ENCODE measurements at regions of chr20 and their contacts with region 1.

Region 1: GRCh38 chr20:53623454-53624211 is 30.0 kb upstream of the ZNF217 start:
- DNase-seq: peak; percentile 89
- ATAC-seq: peak; percentile 62
- H3K4me3 ChIP-seq: peak overlapping the region; percentile 63
- H3K27ac ChIP-seq: peak overlapping the region; percentile 89
- H3K4me1 ChIP-seq: peaks cover 41% of the 10 kb centered on the region
- H3K27me3 ChIP-seq: no peaks in the 10 kb centered on the region
- CTCF ChIP-seq: peak; percentile 38; the same call in 1 of the 2 replicates

Region 2: GRCh38 chr20:53578492-53579222 is 45.0 kb before region 1 on chr20:
- CTCF ChIA-PET with region 1: interaction called, 3 read pairs
- POLR2A ChIA-PET with region 1: interaction called, 3 read pairs
- intact Hi-C with region 1: loop called (anchors 2 kb)
- DNase-seq: peak; percentile 100
- ATAC-seq: peak; percentile 12
- H3K4me3 ChIP-seq: peak overlapping the region; percentile 75
- H3K27ac ChIP-seq: peak overlapping the region; percentile 88
- H3K4me1 ChIP-seq: peaks cover 59% of the 10 kb centered on the region
- H3K27me3 ChIP-seq: no peaks in the 10 kb centered on the region
- CTCF ChIP-seq: peak; percentile 99

Region 3: DNA sequence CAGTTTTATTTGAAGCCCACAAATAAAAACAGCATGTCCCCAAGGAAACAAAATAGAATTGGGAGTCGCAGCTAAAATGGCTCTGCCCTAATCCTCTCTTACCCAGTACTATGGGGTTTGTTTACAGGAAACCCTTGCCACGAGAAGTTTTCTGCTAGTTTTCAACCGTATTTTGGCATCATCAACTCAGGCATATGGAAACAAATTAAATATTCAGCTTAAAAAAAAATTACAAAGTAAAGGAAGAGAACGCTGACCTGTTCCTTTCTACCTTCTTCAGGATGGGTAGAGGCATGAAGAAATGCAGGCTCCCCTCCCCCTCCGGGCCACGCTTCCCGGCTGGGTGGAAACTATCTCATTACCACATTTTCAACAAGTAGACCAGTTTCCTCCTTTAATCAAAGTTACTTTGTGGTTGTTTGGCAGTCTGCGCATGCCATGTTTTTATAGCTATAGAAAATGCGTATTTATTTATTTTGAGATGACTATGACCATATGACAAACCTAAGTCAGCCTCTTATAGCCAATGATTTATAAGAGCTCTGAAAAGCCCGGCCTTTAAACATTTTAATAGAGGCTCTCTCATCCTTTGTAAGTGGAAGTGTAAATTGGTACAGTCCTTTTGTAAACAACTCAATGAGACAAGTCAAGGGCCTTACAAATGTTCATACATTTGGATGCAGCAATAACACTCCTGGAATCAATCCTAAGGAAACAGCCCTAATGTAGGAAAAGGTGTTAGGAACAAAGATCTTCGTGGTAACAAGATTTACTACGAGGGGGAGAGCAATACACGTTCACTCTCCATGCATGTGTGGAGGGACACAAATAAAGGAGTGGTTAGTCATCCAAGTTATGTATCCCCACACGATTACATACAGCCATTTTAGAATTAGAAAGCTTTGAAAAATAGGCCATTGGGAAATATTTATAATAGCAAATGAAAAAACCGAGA is 13.9 kb before region 1 on chr20:
- CTCF ChIA-PET with region 1: interaction called, 12 read pairs
- POLR2A ChIA-PET with region 1: interaction called, 6 read pairs
- intact Hi-C with region 1: loop called (anchors 1 kb)
- DNase-seq: peak; percentile 93
- ATAC-seq: peak; percentile 85
- H3K4me3 ChIP-seq: peak overlapping the region; percentile 25
- H3K27ac ChIP-seq: peak overlapping the region; percentile 74
- H3K4me1 ChIP-seq: peaks cover 52% of the 10 kb centered on the region
- H3K27me3 ChIP-seq: no peaks in the 10 kb centered on the region
- CTCF ChIP-seq: no peak

Region 4: GRCh38 chr20:53664113-53664850 is 40.6 kb after region 1 on chr20:
- CTCF ChIA-PET with region 1: no interaction called
- POLR2A ChIA-PET with region 1: no interaction called
- intact Hi-C with region 1: loop called (anchors 1 kb)
- DNase-seq: no peak
- ATAC-seq: peak; percentile 29; the same call in 1 of the 2 replicates
- H3K4me3 ChIP-seq: no peak overlapping the region
- H3K27ac ChIP-seq: no peak overlapping the region
- H3K4me1 ChIP-seq: no peaks in the 10 kb centered on the region
- H3K27me3 ChIP-seq: no peaks in the 10 kb centered on the region
- CTCF ChIP-seq: no peak

Region 5: GRCh38 chr20:53773792-53774401 is 150.3 kb after region 1 on chr20:
- CTCF ChIA-PET with region 1: no interaction called
- POLR2A ChIA-PET with region 1: interaction called, 13 read pairs
- intact Hi-C with region 1: loop called (anchors 1 kb)
- DNase-seq: peak; percentile 100
- ATAC-seq: peak; percentile 75
- H3K4me3 ChIP-seq: peak overlapping the region; percentile 54
- H3K27ac ChIP-seq: peak overlapping the region; percentile 92
- H3K4me1 ChIP-seq: peaks cover 48% of the 10 kb centered on the region
- H3K27me3 ChIP-seq: no peaks in the 10 kb centered on the region
- CTCF ChIP-seq: no peak

Measured in PC-3 (cell line).